ENCODE measurements at regions of chr9 and their contacts with region 1.

Region 1: DNA sequence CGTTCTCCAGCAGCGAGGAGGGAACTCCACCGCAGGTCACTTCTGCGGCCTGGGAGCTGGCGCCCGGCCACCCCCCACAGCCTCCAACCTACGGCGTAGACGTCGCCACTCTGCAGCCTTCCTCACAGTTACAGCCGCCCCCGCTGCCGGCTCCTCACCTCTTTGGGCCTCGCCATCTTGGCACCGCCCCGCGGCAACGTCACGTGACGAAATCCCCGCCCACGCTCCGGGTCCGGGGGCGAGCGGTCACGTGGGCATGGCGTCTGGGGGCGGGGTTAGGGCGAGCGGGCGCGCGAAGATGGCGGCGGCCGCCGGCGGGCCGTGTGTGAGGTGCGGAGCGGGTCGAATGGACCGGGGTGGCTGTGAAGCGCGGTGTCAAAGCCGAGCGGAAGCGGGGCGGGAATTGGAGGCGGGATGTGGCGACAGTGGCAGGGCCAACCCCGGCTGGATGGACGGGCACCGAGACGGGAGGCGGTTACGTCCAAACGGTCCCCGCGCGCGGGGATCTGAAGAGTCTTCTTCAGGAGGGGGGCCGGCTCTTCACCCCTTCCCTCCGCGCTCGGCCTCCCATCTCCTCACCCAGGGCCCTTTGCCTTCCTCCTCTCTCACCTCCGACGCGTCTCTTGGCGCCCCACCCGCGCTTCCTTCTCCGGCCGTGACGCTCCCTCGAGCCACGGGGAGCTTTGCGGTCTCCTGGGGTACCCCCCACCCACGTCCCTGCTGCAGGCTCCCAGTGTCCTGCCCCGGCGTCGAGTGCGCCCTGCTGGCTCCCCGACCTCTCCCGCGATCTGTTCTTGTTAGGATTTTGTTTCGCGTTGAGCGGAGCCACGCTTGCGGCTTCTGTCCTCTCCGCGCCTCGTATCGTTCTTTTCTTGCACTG is at the starts of genes DOLK and NUP188:
- DNase-seq: peak; percentile 99
- H3K4me3 Mint-ChIP-seq: peak within 1 kb of the TSS; percentile 98
- H3K27ac Mint-ChIP-seq: peak within 1 kb of the TSS; percentile 99
- H3K4me1 Mint-ChIP-seq: peaks cover 37% of the 10 kb centered on the region
- H3K27me3 Mint-ChIP-seq: no peaks in the 10 kb centered on the region
- total RNA-seq, gene DOLK: 17.7 and 18.1 TPM in 2 replicates
- total RNA-seq, gene NUP188: 154 and 158 TPM in 2 replicates

Region 2: GRCh38 chr9:128702445-128702948 is 245.2 kb before region 1 on chr9 and contains the start of gene PKN3:
- intact Hi-C with region 1: loop called (anchors 5 kb)
- DNase-seq: peak; percentile 82
- H3K4me3 Mint-ChIP-seq: peak within 1 kb of the TSS; percentile 86
- H3K27ac Mint-ChIP-seq: peak within 1 kb of the TSS; percentile 77
- H3K4me1 Mint-ChIP-seq: no peaks in the 10 kb centered on the region
- H3K27me3 Mint-ChIP-seq: peaks cover 2% of the 10 kb centered on the region
- total RNA-seq, gene PKN3: 17.7 and 19.3 TPM in 2 replicates

Region 3: GRCh38 chr9:128818099-128818838 is 129.4 kb before region 1 on chr9 and contains the start of gene ENDOG:
- intact Hi-C with region 1: loop called (anchors 1 kb)
- DNase-seq: peak; percentile 99
- H3K4me3 Mint-ChIP-seq: peak within 1 kb of the TSS; percentile 88
- H3K27ac Mint-ChIP-seq: peak within 1 kb of the TSS; percentile 79
- H3K4me1 Mint-ChIP-seq: peaks cover 14% of the 10 kb centered on the region
- H3K27me3 Mint-ChIP-seq: no peaks in the 10 kb centered on the region
- total RNA-seq, gene ENDOG: 22.1 and 26.2 TPM in 2 replicates

Region 4: GRCh38 chr9:128902351-128903078 is 45.1 kb before region 1 on chr9:
- intact Hi-C with region 1: loop called (anchors 1 kb)
- DNase-seq: peak; percentile 83
- H3K4me3 Mint-ChIP-seq: peak overlapping the region; percentile 66
- H3K27ac Mint-ChIP-seq: peak overlapping the region; percentile 96
- H3K4me1 Mint-ChIP-seq: peaks cover 65% of the 10 kb centered on the region
- H3K27me3 Mint-ChIP-seq: no peaks in the 10 kb centered on the region

Region 5: GRCh38 chr9:129006328-129007034 is 58.8 kb after region 1 on chr9:
- intact Hi-C with region 1: no loop called
- DNase-seq: peak; percentile 22
- H3K4me3 Mint-ChIP-seq: no peak overlapping the region
- H3K27ac Mint-ChIP-seq: peak overlapping the region; percentile 40
- H3K4me1 Mint-ChIP-seq: no peaks in the 10 kb centered on the region
- H3K27me3 Mint-ChIP-seq: no peaks in the 10 kb centered on the region

Region 6: DNA sequence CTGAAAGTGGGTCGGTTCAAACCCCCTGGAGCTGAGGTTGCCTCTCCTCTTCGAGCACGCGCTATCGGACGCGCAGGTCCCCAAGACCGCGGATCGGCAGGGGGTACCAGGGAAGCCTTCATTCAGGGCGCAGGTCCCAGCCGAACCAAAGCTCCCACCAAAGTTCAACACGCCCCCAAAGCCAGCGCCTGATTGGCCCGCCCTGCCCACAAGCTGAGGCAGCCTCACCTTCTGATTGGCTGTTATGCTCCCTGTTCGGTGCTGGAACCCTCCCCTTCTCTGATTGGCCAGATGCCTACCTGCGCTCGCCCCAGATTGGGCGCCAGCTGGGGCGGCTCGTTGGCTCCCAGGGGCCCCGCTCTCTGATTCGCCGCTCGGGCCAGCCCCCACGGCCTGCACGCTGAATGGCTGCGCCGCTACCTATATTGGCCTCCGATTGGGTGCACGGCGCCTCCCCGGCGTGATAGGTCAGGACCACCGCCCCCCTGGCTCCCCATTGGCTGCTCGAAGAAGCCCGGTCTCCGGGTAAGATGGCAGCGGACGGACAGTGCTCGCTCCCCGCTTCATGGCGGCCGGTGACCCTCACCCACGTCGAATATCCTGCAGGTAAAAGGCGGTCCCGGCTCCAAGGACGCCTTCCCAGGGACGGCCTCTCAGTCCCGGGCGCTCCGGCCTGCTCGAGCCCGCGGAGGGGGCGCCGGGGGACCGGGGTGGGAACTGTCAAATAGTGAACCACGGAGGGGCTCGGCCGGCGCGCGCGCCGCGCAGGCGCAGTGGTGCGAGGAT is 133.1 kb after region 1 on chr9 and contains the start of gene DOLPP1:
- intact Hi-C with region 1: loop called (anchors 2 kb)
- DNase-seq: peak; percentile 99
- H3K4me3 Mint-ChIP-seq: peak within 1 kb of the TSS; percentile 94
- H3K27ac Mint-ChIP-seq: peak within 1 kb of the TSS; percentile 82
- H3K4me1 Mint-ChIP-seq: peaks cover 17% of the 10 kb centered on the region
- H3K27me3 Mint-ChIP-seq: peaks cover 2% of the 10 kb centered on the region
- total RNA-seq, gene DOLPP1: 28.4 and 30.2 TPM in 2 replicates

Measured in activated T-helper 1 cell treated with anti-CD3 and anti-CD28 coated beads, Interleukin-12 subunit alpha, Interleukin-12 subunit beta, Interleukin-2, Interleukin-4 antibody, amounts not matched to agents 30 ng/mL and 10 ng/mL and 1 ng/mL, durations not matched to agents 14 hours and 24 hours and 36 hours (primary cell).